ENCODE measurements at regions of chr20 and their contacts with region 1.

Region 1: DNA sequence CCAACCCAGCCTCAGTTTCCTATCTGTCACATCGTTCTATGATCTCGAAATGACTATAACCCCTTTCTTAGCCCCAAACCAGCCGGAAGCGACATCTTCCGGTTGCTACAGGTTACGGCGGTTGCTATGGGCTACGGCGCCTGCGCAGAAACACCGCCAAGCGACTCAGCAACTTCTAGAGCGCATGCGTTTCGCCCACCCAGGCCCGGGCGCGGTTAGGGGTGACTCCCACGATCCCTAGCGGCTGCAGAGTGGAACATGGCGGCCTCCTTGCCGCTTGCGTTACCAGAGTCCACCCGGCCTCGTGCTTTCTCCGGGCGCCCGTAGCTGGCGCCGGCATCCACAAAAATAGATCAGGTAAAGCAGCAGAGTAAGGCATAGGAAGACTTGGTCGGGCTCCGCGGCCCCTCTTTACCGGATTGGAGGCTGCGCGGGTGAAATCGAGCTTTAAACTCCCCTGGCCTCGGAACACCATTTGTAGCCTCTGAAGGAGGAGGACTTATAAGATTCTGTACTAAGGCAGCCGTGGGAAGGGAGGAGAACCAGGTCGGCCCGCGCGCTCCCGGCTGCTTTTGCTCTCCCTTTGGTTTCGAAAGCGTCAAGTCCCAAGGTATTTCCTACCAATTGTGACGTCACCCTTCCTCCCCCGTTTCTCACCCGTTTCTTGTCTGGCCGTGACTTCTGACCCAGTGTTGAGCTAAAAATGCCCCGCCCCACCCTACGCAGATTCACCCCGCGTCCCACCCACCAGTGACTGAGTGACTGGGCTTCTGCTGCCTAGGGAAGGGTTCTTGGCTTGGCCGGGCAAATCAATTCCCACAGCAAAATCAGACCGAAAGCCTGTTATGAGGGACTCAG is 3.5 kb downstream of the SDCBP2 start:
- DNase-seq: peak; percentile 98 to 99 (median 98)
- ATAC-seq: peak; percentile 90 to 93 (median 91)
- H3K4me3 ChIP-seq: peak overlapping the region; percentile 60 to 96 (median 78)
- H3K27ac ChIP-seq: peak overlapping the region; percentile 96 to 100 (median 99)
- H3K4me1 ChIP-seq: peaks cover 22 to 90% (median 72%) of the 10 kb centered on the region in 12 donors
- H3K27me3 ChIP-seq: no peaks in the 10 kb centered on the region
- CTCF ChIP-seq: peak in 9 of 12 donors; percentile 10 to 50 (median 29)
- POLR2A ChIP-seq: peak; percentile 78 to 79

Region 2: GRCh38 chr20:1375515-1375914 is 50.1 kb after region 1 on chr20:
- intact Hi-C with region 1: loop called in 5 of 10 experiments (anchors 5 kb)
- DNase-seq: no peak
- ATAC-seq: peak in 3 of 4 donors; percentile 46 to 64 (median 64)
- H3K4me3 ChIP-seq: peak overlapping the region in 1 of 12 donors; percentile 2
- H3K27ac ChIP-seq: peak overlapping the region in 11 of 12 donors; percentile 5 to 88 (median 62)
- H3K4me1 ChIP-seq: peaks cover 8 to 100% (median 86%) of the 10 kb centered on the region in 12 donors
- H3K27me3 ChIP-seq: no peaks in the 10 kb centered on the region
- CTCF ChIP-seq: no peak
- POLR2A ChIP-seq: no peak

Region 3: GRCh38 chr20:1381753-1382591 is 56.6 kb after region 1 on chr20:
- intact Hi-C with region 1: loop called in 2 of 10 experiments (anchors 5 kb)
- DNase-seq: peak in 1 of 5 donors; percentile 31
- ATAC-seq: peak; percentile 31 to 78 (median 62)
- H3K4me3 ChIP-seq: no peak overlapping the region
- H3K27ac ChIP-seq: peak overlapping the region in 10 of 12 donors; percentile 23 to 60 (median 39)
- H3K4me1 ChIP-seq: peaks cover 0 to 99% (median 78%) of the 10 kb centered on the region in 12 donors
- H3K27me3 ChIP-seq: no peaks in the 10 kb centered on the region
- CTCF ChIP-seq: no peak
- POLR2A ChIP-seq: no peak

Measured in heart left ventricle (tissue), 16 donors.